ENCODE measurements at regions of chr5 and their contacts with region 1.

Region 1: GRCh38 chr5:91797581-91797980 is 414.5 kb upstream of the ARRDC3 start:
- DNase-seq: no peak
- H3K4me3 ChIP-seq: no peak overlapping the region
- H3K27ac ChIP-seq: no peak overlapping the region
- H3K4me1 ChIP-seq: no peaks in the 10 kb centered on the region
- H3K27me3 ChIP-seq: no peaks in the 10 kb centered on the region
- CTCF ChIP-seq: no peak
- EP300 ChIP-seq: no peak
- POLR2A ChIP-seq: no peak

Region 2: GRCh38 chr5:91562922-91563321 is 234.7 kb before region 1 on chr5:
- intact Hi-C with region 1: no loop called
- DNase-seq: no peak
- H3K4me3 ChIP-seq: no peak overlapping the region
- H3K27ac ChIP-seq: no peak overlapping the region
- H3K4me1 ChIP-seq: no peaks in the 10 kb centered on the region
- H3K27me3 ChIP-seq: no peaks in the 10 kb centered on the region
- CTCF ChIP-seq: no peak
- EP300 ChIP-seq: no peak
- POLR2A ChIP-seq: no peak

Region 3: DNA sequence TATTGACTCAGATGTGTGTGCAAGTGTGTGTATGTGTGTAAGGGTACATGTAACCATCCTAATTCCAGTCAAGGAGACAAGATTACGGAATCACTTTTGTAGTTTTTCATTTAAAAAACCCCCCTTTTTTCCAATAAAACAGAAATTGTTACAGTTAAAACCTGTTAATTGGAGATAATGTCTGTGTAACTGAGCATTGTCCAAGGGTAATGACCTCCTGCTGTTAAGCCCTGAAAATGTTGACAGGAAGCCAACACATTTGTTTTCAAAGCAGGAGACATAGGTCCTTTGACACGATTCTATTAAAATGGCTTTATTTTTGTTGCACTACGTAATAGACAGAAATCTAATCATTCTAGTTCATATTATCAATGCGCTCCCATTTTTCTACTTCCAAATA is 42.8 kb after region 1 on chr5:
- intact Hi-C with region 1: loop called in 1 of 4 experiments (anchors 1 kb)
- DNase-seq: no peak
- H3K4me3 ChIP-seq: no peak overlapping the region
- H3K27ac ChIP-seq: no peak overlapping the region
- H3K4me1 ChIP-seq: no peaks in the 10 kb centered on the region
- H3K27me3 ChIP-seq: no peaks in the 10 kb centered on the region
- CTCF ChIP-seq: no peak
- EP300 ChIP-seq: no peak
- POLR2A ChIP-seq: no peak

Measured in ovary (tissue), 10 donors.